ENCODE measurements at regions of chr10 and their contacts with region 1.

Region 1: GRCh38 chr10:69506834-69507721 is 55.8 kb downstream of the TSPAN15 start:
- DNase-seq: peak; percentile 44 to 56
- ATAC-seq: peak; percentile 57

Region 2: DNA sequence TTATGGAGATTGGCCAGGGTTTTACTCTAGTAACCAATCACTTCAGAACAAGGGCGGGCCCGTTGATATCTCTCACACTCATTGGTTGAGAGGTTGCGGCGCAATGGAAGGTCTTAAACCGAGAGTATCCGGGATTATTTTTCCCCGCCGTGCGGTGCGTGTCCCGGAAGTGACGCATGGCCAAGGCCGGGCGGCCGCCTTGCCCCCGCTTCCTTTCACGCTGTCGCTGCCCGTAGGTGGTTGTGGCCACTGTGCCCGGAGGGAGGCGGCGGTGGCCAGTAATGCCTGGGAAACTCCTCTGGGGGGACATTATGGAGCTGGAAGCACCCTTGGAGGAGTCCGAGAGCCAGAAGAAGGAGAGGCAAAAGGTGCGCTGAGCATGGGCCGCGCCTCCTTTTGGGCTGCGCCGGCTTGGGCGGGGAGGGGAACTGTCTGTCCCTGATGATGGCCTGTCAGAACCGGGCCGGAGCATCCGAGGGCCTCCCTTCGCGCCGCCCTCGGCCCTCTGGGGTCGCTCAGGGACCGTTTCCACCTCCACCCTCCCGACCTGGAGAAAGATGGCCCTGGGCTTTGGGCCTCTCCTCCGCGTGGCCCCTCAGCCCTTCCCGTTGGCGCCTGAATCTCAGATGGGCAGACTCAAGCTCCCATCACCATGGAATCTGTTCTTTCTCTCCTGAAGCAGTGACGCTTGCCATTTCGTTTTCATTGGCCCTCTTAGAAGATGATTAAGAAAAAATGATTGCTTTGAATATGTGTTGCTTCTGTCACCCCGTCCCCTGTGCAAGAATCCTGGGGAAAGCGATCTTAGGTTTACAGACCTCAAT is 605.8 kb before region 1 on chr10 and contains the start of gene DDX50:
- intact Hi-C with region 1: no loop called
- DNase-seq: peak; percentile 97 to 98
- ATAC-seq: peak; percentile 93
- total RNA-seq, gene DDX50: 17.5 to 17.9 TPM

Region 3: GRCh38 chr10:69360485-69361324 is 146.4 kb before region 1 on chr10:
- intact Hi-C with region 1: no loop called
- DNase-seq: peak; percentile 75 to 86
- ATAC-seq: peak; percentile 93

Region 4: GRCh38 chr10:69413221-69413865 is 93.7 kb before region 1 on chr10:
- intact Hi-C with region 1: loop called in 1 of 2 experiments (anchors 5 kb)
- DNase-seq: peak; percentile 51 to 72
- ATAC-seq: no peak

Region 5: DNA sequence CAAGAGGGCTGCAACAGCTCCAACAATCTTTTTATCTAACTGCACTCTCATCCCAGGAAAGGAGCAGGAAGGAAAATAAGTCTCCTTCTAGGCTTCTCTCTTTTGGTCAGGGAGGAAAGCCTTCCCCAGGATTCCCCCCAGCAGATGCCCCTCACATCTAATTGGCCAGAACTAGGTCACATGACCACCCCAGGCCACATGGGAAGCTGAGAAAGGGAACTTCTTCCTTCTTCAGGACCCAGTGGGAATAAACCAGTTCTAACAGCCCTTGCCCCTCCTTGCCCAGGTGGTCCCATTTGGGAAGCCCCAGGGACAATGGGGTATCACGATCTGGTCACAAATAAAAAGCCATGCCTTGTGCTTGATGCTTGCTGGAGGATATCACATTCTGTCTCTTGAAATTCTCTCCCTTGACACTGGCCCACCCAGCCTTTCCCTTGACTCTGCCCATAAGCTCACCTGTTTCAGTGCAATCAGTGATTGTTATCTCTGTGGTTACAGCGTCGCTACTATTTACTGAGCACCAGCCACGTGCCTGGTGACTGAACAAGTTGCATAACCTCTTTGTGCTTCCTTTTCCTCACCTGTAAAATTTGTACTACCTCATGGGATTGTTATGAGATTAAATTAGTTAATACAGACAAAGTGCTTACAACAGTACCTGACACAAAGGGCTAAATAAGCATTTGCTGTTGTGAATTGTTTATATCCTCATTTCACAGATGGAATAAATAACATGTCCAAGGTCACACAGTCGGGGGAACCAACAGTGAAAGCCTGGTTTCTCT is 81.4 kb before region 1 on chr10:
- intact Hi-C with region 1: loop called (anchors 5 to 10 kb)
- DNase-seq: peak; percentile 70 to 76
- ATAC-seq: peak; percentile 85

Measured in left colon (tissue), 2 donors.